Motor neuron (in vitro differentiated cells): ENCODE measurements at regions of chr12 and their contacts with region 1.

Region 1: GRCh38 chr12:25130741-25131188 is 64.2 kb downstream of the DNAI7 start:
- ATAC-seq: peak in 2 of 8 experiments; percentile 36 to 37
- H3K4me3 ChIP-seq: no peak overlapping the region
- H3K27ac ChIP-seq: no peak overlapping the region
- H3K4me1 ChIP-seq: no peaks in the 10 kb centered on the region

Region 2: DNA sequence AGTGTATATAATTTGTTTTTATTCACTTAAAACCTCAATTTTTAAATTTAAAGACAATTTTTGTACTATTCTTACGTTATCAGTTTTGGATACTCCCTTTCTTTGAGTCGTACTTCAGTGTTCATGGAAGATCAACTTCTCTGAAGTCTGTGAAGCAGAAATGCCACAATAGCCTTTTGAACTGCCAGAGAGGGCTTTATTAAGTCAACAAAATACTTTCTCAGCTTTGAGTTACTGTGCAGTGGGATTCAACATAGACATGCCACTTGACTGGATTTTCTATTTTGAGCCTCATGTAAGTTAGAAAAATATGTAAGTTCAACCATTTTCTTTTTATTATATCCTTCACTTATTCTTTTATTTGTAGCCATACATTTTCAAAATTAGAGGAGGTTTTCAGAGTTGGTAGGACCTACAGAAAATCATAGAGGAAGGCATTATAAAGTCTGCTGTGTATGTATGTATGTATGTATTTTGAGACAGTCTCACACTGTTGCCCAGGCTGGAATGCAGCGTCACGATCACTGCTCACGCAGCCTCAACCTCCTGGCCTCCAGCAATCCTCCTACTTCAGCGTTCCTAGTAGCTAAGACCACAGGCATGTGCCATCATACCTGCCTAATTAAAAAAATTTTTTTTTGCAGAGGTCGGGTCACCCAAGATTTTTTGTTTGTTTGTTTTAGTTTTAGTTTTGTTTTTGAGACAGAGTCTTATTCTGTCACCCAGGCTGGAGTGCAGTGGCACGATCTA is 150.6 kb before region 1 on chr12:
- in situ Hi-C with region 1: loop called in 4 of 9 experiments (anchors 10 to 25 kb)
- ATAC-seq: peak in 2 of 8 experiments; percentile 31 to 66
- H3K4me3 ChIP-seq: no peak overlapping the region
- H3K27ac ChIP-seq: no peak overlapping the region
- H3K4me1 ChIP-seq: peaks cover 5 to 9% of the 10 kb centered on the region in 2 donors

Region 3: GRCh38 chr12:24991209-24992049 is 139.3 kb before region 1 on chr12:
- in situ Hi-C with region 1: loop called in 4 of 9 experiments (anchors 10 to 25 kb)
- ATAC-seq: peak; percentile 42 to 89 (median 62)
- H3K4me3 ChIP-seq: no peak overlapping the region
- H3K27ac ChIP-seq: no peak overlapping the region
- H3K4me1 ChIP-seq: peaks cover 5 to 10% of the 10 kb centered on the region in 2 donors

Region 4: DNA sequence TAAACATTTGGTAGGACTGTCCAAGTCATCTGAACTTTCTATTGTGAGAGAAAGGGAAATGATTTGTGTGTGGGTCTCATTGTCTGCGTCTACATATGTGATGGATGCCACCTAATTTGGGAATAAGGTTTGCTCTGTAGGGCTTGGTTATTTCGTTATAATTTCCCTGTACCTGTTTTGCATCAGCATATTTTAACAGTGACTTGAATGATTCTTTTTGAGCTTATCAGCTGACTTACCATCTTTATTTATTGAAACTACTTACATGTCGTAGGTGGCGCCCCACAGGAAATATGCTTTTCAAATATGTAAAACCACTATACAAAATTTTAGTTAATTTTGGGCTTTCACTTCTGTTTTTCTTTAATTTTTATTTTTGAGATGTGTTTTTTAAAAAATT is 125.4 kb before region 1 on chr12:
- in situ Hi-C with region 1: no loop called
- ATAC-seq: no peak
- H3K4me3 ChIP-seq: no peak overlapping the region
- H3K27ac ChIP-seq: no peak overlapping the region
- H3K4me1 ChIP-seq: no peaks in the 10 kb centered on the region

Region 5: GRCh38 chr12:25041006-25041741 is 89.6 kb before region 1 on chr12:
- in situ Hi-C with region 1: no loop called
- ATAC-seq: peak in 2 of 8 experiments; percentile 22 to 26
- H3K4me3 ChIP-seq: no peak overlapping the region
- H3K27ac ChIP-seq: no peak overlapping the region
- H3K4me1 ChIP-seq: no peaks in the 10 kb centered on the region